CD14-positive monocyte (primary cell): ENCODE measurements at regions of chr16 and their contacts with region 1.

Region 1: DNA sequence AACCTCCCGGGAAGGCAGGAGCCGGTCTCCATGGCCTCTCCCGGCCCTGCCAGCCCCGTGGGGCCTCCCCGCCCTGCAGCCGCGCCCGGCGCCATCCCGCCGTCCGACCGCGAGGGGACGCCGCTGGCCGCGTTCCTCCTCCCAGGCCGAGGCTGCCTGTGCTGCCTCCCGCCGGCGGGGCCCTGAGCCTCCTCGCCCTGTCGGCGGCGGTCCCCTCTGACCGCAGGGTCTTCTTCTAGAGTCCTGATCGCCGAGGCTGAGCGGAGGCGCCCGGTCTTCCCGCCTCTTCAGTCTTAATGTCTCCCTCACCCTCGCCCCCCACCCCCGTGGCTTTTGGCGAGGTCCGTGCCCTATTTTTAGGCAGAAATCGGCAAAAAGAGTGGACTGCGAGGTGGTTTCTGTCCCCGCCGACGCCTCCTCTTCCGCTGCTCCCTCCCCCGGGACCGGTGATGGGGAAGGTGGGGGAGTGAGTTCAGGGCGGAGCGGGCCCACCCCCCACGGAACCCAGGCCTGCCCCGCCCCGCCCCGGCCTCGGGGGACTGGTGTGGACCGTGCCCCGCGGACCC is 794 bp upstream of the CPNE7 start:
- DNase-seq: peak; percentile 16 to 39 (median 18)
- H3K4me3 ChIP-seq: peak overlapping the region in 1 of 3 experiments; percentile 61
- H3K4me3 Mint-ChIP-seq: peak overlapping the region; percentile 61 to 80
- H3K27ac ChIP-seq: no peak overlapping the region
- H3K27ac Mint-ChIP-seq: no peak overlapping the region
- H3K4me1 ChIP-seq: peaks cover 10 to 20% of the 10 kb centered on the region in 2 donors
- H3K4me1 Mint-ChIP-seq: peaks cover 12% of the 10 kb centered on the region
- H3K27me3 ChIP-seq: peaks cover 15 to 41% of the 10 kb centered on the region in 2 donors
- H3K27me3 Mint-ChIP-seq: peaks cover 39 to 62% (median 44%) of the 10 kb centered on the region in 3 donors
- CTCF ChIP-seq: peak; percentile 85

Region 2: DNA sequence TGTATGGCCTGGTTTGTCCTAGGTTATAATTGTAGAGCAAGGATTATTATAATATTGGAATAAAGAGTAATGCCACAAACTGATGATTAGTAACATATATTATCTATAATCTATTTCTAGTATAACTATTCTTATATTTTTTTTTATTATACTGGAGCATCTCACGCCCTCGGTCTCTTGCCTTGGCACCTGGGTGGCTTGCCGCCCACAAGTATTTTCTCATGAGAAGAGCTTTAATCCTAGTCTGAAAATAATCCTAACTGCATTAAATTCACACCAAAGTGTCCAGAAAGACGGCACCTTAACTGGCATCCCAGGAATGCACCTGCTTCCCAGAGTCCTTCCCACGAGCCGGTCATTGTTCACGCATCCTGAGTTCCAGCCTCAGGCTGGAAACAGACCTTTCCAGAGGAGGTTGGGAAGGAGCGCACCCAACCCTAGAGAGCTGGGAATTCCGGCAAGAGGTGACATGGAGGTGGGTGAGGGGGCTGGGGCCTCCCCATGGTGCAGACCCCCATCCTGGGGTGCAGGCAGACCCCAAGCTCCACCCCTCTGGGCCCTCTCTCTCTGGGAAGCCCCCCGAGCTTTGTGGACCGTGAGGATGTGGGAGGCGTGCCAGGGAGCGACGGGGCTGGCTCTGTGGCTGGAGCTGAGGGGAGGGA is 66.8 kb after region 1 on chr16:
- intact Hi-C with region 1: loop called (anchors 5 to 10 kb)
- DNase-seq: no peak
- H3K4me3 ChIP-seq: no peak overlapping the region
- H3K4me3 Mint-ChIP-seq: peak overlapping the region in 1 of 2 donors; percentile 87
- H3K27ac ChIP-seq: no peak overlapping the region
- H3K27ac Mint-ChIP-seq: no peak overlapping the region
- H3K4me1 ChIP-seq: peaks cover 0 to 5% of the 10 kb centered on the region in 2 donors
- H3K4me1 Mint-ChIP-seq: peaks cover 7% of the 10 kb centered on the region
- H3K27me3 ChIP-seq: no peaks in the 10 kb centered on the region
- H3K27me3 Mint-ChIP-seq: peaks cover 0 to 7% (median 7%) of the 10 kb centered on the region in 3 donors
- CTCF ChIP-seq: peak; percentile 48